ENCODE measurements at regions of chr20 and their contacts with region 1.

Region 1: DNA sequence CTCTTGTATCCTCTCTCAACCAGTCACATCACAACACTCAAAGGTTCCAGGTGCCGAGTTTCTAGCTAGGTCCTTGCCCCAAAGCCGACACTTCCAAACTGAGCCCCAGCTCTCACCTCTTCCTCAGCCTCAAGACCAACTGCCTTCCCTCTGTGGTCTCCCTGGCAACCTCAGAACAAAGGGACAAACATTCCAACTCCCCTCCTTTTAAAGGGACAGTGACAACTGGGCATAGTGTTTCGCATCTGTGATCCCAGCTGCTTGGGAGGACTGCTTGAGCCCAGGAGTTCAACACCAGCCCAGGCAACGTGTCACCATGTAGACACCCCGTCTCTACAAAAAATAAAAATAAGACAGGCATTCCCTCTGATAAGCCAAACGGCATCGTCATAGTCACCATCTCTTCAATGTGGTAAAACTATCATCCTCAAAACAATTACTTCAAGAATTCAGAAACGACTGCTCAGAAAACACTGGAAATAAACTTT is 11.3 kb downstream of the DIDO1 start:
- DNase-seq: peak; percentile 19
- ATAC-seq: peak; percentile 50; the same call in 1 of the 2 replicates
- H3K4me3 ChIP-seq: no peak overlapping the region
- H3K27ac ChIP-seq: no peak overlapping the region
- H3K4me1 ChIP-seq: peaks cover 12% of the 10 kb centered on the region; the same call in 1 of the 2 replicates
- H3K27me3 ChIP-seq: no peaks in the 10 kb centered on the region
- CTCF ChIP-seq: no peak
- POLR2A ChIP-seq: no peak
- RAD21 ChIP-seq: no peak

Region 2: DNA sequence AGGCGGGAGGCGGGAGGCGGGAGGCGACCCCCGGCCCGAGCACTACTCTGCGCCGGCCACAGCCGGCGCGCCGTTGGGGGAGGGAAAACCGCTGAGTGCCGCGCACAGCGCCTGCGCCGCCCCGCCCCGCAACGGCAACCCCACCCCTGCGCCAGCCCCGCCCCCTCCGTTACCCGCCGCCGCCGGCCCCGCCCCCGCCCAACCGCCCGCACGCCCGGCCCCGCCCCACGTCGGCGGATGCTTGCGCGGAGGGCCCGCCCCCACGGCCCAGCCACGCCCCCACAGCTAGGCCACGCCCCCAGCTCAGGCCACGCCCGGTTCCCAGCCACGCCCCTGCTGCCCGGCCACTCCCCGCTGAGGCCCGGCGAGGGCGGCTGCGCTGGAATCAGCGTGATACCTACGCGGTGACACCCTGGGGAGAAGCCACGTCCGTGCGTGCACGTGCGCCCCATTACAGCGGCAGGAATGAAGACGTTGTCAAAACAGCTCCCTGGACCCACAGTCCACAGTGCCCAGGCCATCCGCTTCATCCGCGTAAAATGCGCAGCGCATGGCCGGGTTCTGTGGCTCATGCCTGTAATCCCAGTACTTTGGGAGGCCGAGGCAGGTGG is 53.2 kb before region 1 on chr20 and contains the start of gene TCFL5:
- CTCF ChIA-PET with region 1: interaction called, 3 read pairs
- POLR2A ChIA-PET with region 1: no interaction called
- dilution Hi-C with region 1: no loop called
- in situ Hi-C with region 1: no loop called
- intact Hi-C with region 1: loop called (anchors 5 kb)
- DNase-seq: peak; percentile 76
- ATAC-seq: peak; percentile 94
- H3K4me3 ChIP-seq: peak within 1 kb of the TSS; percentile 100
- H3K27ac ChIP-seq: peak within 1 kb of the TSS; percentile 87
- H3K4me1 ChIP-seq: 0 out of 2 replicates have a peak, but pooled peaks cover 3% of the 10 kb centered on the region
- H3K27me3 ChIP-seq: no peaks in the 10 kb centered on the region; the same call in 1 of the 2 replicates
- CTCF ChIP-seq: no peak
- POLR2A ChIP-seq: no peak
- RAD21 ChIP-seq: no peak
- total RNA-seq, gene TCFL5: 8.2 and 8.3 TPM in 2 replicates

Region 3: GRCh38 chr20:63025534-63026331 is 110.7 kb after region 1 on chr20:
- CTCF ChIA-PET with region 1: no interaction called
- POLR2A ChIA-PET with region 1: no interaction called
- dilution Hi-C with region 1: no loop called
- in situ Hi-C with region 1: no loop called
- intact Hi-C with region 1: no loop called
- DNase-seq: peak; percentile 7
- ATAC-seq: peak; percentile 41
- H3K4me3 ChIP-seq: no peak overlapping the region
- H3K27ac ChIP-seq: no peak overlapping the region
- H3K4me1 ChIP-seq: no peaks in the 10 kb centered on the region
- H3K27me3 ChIP-seq: peaks cover 78% of the 10 kb centered on the region
- CTCF ChIP-seq: no peak
- POLR2A ChIP-seq: no peak
- RAD21 ChIP-seq: no peak